GM10248 (cell line): ENCODE measurements at regions of chr5 and their contacts with region 1.

Region 1: DNA sequence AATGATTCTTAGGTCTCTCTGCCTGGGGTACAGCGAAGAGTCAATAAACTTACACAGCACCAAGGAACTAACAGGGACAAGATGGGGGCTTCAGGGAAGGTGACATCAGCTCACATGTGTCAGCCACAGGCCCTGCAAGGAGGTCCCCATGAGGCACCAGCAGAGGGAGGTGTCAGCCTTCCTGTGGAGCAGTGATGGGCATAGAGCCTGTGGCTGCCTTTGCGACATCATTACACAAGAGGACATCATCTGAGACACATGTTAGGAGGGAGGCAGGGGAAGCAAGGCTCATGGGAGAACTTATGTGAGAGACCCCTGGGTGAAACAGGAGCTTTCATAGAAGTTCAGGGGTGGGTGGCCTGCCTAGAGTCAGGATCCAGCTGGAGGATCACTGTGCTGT is 389.6 kb downstream of the SEMA5A start:
- DNase-seq: peak; percentile 22
- CTCF ChIP-seq: peak; percentile 37

Region 2: GRCh38 chr5:9166202-9167112 is 10.2 kb after region 1 on chr5:
- CTCF ChIA-PET with region 1: interaction called, 24 read pairs
- POLR2A ChIA-PET with region 1: no interaction called
- DNase-seq: no peak
- CTCF ChIP-seq: no peak